IMR-90 (cell line): ENCODE measurements at regions of chr12 and their contacts with region 1.

Region 1: GRCh38 chr12:53065975-53066931 is 12.9 kb downstream of the SPRYD3 start:
- DNase-seq: peak; percentile 81
- ATAC-seq: peak; percentile 70
- H3K4me3 ChIP-seq: no peak overlapping the region
- H3K27ac ChIP-seq: peak overlapping the region; percentile 45
- H3K4me1 ChIP-seq: peaks cover 32% of the 10 kb centered on the region
- H3K27me3 ChIP-seq: no peaks in the 10 kb centered on the region
- CTCF ChIP-seq: peak; percentile 94
- POLR2A ChIP-seq: no peak
- RAD21 ChIP-seq: peak; percentile 95

Region 2: DNA sequence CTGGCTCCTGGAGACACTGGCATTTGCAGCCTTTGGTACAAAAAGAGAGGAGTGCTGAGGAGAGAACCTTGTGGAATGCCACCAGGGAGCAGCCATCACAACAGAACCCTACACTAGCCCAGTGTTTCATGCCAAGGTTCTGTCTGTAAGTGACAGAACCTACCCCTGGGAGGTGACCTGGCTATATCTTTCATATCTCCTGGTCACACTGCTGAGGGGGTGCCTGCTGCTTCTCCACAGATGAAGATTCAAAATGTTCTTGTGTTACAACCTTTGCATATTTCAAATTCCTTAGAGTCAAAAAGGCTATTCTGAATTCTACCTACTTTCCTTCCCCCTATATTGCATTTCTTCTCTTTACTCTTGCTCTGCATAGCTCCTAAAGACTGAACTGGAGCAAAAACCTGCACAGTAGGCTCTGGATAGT is 72.7 kb before region 1 on chr12:
- CTCF ChIA-PET with region 1: no interaction called
- POLR2A ChIA-PET with region 1: no interaction called
- dilution Hi-C with region 1: no loop called
- in situ Hi-C with region 1: no loop called
- intact Hi-C with region 1: no loop called
- DNase-seq: no peak
- ATAC-seq: peak; percentile 48
- H3K4me3 ChIP-seq: no peak overlapping the region
- H3K27ac ChIP-seq: no peak overlapping the region
- H3K4me1 ChIP-seq: no peaks in the 10 kb centered on the region
- H3K27me3 ChIP-seq: no peaks in the 10 kb centered on the region
- CTCF ChIP-seq: no peak
- POLR2A ChIP-seq: no peak
- RAD21 ChIP-seq: no peak

Region 3: GRCh38 chr12:53098982-53099651 is 32.9 kb after region 1 on chr12:
- CTCF ChIA-PET with region 1: interaction called, 39 read pairs
- POLR2A ChIA-PET with region 1: interaction called, 3 read pairs
- dilution Hi-C with region 1: no loop called
- in situ Hi-C with region 1: no loop called
- intact Hi-C with region 1: loop called (anchors 1 kb)
- DNase-seq: peak; percentile 95
- ATAC-seq: peak; percentile 66
- H3K4me3 ChIP-seq: peak overlapping the region; percentile 60
- H3K27ac ChIP-seq: peak overlapping the region; percentile 94
- H3K4me1 ChIP-seq: peaks cover 31% of the 10 kb centered on the region
- H3K27me3 ChIP-seq: no peaks in the 10 kb centered on the region
- CTCF ChIP-seq: peak; percentile 97
- POLR2A ChIP-seq: 0 out of 2 replicates have a peak, but pooled peaks have one; percentile 41
- RAD21 ChIP-seq: peak; percentile 93

Region 4: DNA sequence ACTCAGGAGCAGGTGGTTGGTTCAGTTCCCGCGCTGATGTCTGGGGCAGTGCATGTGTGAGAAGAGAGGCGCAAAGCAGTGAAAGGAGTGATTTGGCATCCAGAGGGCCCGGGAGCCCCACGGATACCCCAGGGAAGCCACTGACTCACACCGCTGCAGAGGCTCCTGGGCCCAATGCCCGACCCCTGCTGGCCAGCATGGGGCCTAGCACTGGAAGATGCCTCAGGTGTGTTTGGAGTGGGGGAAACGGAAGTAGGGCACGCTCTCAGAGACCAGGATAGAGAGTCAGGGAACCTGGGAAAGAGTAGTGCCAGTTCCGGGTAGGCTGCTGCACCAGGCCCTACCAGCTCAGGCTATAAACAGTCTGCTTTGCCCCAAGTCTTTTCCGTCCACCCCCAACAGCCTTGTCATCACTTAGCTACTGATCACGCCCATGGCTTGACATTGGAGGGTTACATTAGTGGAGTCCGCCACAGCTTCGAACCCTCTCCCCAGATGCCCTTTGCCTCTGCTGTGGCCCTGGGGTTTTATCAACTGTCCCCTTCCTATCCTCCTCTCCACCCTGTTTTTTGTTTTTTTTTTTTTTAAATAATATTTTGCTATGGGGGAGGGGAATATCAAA is 124.0 kb after region 1 on chr12:
- CTCF ChIA-PET with region 1: interaction called, 6 read pairs
- POLR2A ChIA-PET with region 1: no interaction called
- dilution Hi-C with region 1: no loop called
- in situ Hi-C with region 1: loop called (anchors 5 kb)
- intact Hi-C with region 1: loop called (anchors 1 kb)
- DNase-seq: peak; percentile 59
- ATAC-seq: peak; percentile 90
- H3K4me3 ChIP-seq: no peak overlapping the region
- H3K27ac ChIP-seq: no peak overlapping the region
- H3K4me1 ChIP-seq: no peaks in the 10 kb centered on the region; the same call in 1 of the 2 replicates
- H3K27me3 ChIP-seq: no peaks in the 10 kb centered on the region
- CTCF ChIP-seq: peak; percentile 70
- POLR2A ChIP-seq: no peak
- RAD21 ChIP-seq: peak; percentile 59

Region 5: GRCh38 chr12:53198486-53199110 is 132.3 kb after region 1 on chr12:
- CTCF ChIA-PET with region 1: interaction called, 11 read pairs
- POLR2A ChIA-PET with region 1: no interaction called
- dilution Hi-C with region 1: no loop called
- in situ Hi-C with region 1: no loop called
- intact Hi-C with region 1: no loop called
- DNase-seq: no peak
- ATAC-seq: no peak
- H3K4me3 ChIP-seq: no peak overlapping the region
- H3K27ac ChIP-seq: no peak overlapping the region
- H3K4me1 ChIP-seq: no peaks in the 10 kb centered on the region
- H3K27me3 ChIP-seq: peaks cover 2% of the 10 kb centered on the region; the same call in 1 of the 2 replicates
- CTCF ChIP-seq: no peak
- POLR2A ChIP-seq: no peak
- RAD21 ChIP-seq: no peak